HEK293 (cell line): ENCODE measurements at regions of chr5 and their contacts with region 1.

Region 1: GRCh38 chr5:136062366-136063274 is 33.8 kb downstream of the TGFBI start:
- H3K4me3 ChIP-seq: no peak overlapping the region
- H3K27ac ChIP-seq: no peak overlapping the region
- H3K4me1 ChIP-seq: peaks cover 6% of the 10 kb centered on the region
- CTCF ChIP-seq: no peak

Region 2: GRCh38 chr5:135102716-135103574 is 959.7 kb before region 1 on chr5:
- CTCF ChIA-PET with region 1: no interaction called
- POLR2A ChIA-PET with region 1: no interaction called
- H3K4me3 ChIP-seq: no peak overlapping the region
- H3K27ac ChIP-seq: no peak overlapping the region
- H3K4me1 ChIP-seq: no peaks in the 10 kb centered on the region
- CTCF ChIP-seq: no peak

Region 3: DNA sequence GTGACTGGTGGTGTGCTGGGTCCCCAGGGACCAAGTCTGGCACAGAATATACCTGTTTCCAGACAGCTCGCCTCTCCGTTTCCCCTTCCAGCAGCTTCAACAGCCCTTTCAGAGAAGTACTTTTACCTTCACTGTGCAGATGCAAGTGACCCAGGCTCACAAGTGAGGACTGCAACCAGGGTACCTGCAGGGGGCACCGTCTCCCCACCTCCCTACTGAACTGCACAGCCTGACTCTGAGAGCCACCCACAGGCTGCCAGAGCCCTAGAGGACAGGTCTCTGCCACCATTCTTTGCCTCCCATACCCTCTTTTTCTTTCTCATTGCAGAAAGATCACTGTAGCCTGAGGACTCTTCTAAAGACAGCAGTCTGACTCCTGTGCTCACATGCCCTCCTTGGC is 182.3 kb before region 1 on chr5:
- CTCF ChIA-PET with region 1: interaction called, 12 read pairs
- POLR2A ChIA-PET with region 1: no interaction called
- H3K4me3 ChIP-seq: no peak overlapping the region
- H3K27ac ChIP-seq: no peak overlapping the region
- H3K4me1 ChIP-seq: peaks cover 7% of the 10 kb centered on the region
- CTCF ChIP-seq: no peak

Region 4: GRCh38 chr5:135944967-135945560 is 117.6 kb before region 1 on chr5:
- CTCF ChIA-PET with region 1: interaction called, 24 read pairs
- POLR2A ChIA-PET with region 1: interaction called, 3 read pairs
- H3K4me3 ChIP-seq: no peak overlapping the region
- H3K27ac ChIP-seq: no peak overlapping the region
- H3K4me1 ChIP-seq: no peaks in the 10 kb centered on the region
- CTCF ChIP-seq: no peak

Region 5: GRCh38 chr5:135993880-135994636 is 68.6 kb before region 1 on chr5:
- CTCF ChIA-PET with region 1: interaction called, 14 read pairs
- POLR2A ChIA-PET with region 1: interaction called, 10 read pairs
- H3K4me3 ChIP-seq: no peak overlapping the region
- H3K27ac ChIP-seq: 0 out of 2 replicates have a peak overlapping the region, but pooled peaks have one; percentile 25
- H3K4me1 ChIP-seq: no peaks in the 10 kb centered on the region
- CTCF ChIP-seq: no peak

Region 6: GRCh38 chr5:136042665-136043121 is 19.9 kb before region 1 on chr5:
- CTCF ChIA-PET with region 1: interaction called, 21 read pairs
- POLR2A ChIA-PET with region 1: interaction called, 6 read pairs
- H3K4me3 ChIP-seq: no peak overlapping the region
- H3K27ac ChIP-seq: peak overlapping the region; percentile 17; the same call in 1 of the 2 replicates
- H3K4me1 ChIP-seq: peaks cover 5% of the 10 kb centered on the region
- CTCF ChIP-seq: no peak

Region 7: GRCh38 chr5:136080483-136081216 is 18.0 kb after region 1 on chr5:
- CTCF ChIA-PET with region 1: interaction called, 16 read pairs
- POLR2A ChIA-PET with region 1: no interaction called
- H3K4me3 ChIP-seq: peak overlapping the region; percentile 44
- H3K27ac ChIP-seq: peak overlapping the region; percentile 43; the same call in 1 of the 2 replicates
- H3K4me1 ChIP-seq: peaks cover 3% of the 10 kb centered on the region; the same call in 1 of the 2 replicates
- CTCF ChIP-seq: no peak